A549 (cell line): ENCODE measurements at regions of chr2 and their contacts with region 1.

Region 1: GRCh38 chr2:200811336-200812121 is at the start of gene BZW1:
- DNase-seq: peak; percentile 85 to 97
- ATAC-seq: peak; percentile 82 to 90
- H3K4me3 ChIP-seq: peak within 1 kb of the TSS; percentile 97
- H3K27ac ChIP-seq: peak within 1 kb of the TSS; percentile 96 to 99
- H3K4me1 ChIP-seq: peaks cover 45% of the 10 kb centered on the region
- CTCF ChIP-seq: no peak
- EP300 ChIP-seq: no peak
- POLR2A ChIP-seq: peak; percentile 46
- RAD21 ChIP-seq: 0 out of 5 replicates have a peak, but pooled peaks of 1 of the 2 experiments have one; percentile 2
- polyA plus RNA-seq, gene BZW1: 439 and 494 TPM in 2 replicates

Region 2: DNA sequence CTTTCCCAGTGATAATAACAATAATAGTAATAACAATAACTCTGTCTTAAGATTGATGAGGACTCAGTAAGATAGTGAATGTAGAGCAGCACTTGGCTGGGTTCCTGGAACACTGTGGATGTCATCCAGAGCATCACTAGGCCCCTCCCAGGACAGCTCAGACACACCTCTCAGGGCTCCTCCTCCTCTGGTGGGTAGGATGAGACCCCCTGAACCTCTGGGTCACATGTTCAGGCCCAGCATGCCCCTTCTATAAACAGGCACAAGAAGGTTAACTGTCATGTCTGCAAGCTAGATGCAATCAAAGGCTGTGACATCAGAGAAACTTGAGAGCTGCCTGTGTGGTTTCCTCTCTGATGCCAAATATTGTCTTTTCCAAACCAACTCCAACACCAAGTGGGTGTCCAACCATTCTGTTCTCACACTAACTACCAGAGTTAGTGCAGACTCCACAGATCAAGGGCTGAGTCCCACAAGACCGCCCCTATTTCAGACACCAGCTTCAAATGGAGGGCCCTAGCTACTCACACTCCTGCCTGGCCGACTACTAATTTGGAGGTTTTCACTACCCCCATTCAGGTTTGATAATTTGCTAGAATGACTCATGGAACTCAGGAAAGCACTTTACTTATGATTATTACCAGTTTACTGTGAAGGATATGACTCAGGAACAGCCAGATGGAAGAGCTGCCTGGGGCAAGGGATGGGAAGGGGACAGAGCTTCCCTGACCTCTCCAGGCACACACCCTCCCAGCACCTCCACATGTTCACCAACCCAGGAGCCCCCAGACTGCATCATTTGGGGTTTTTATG is 46.2 kb before region 1 on chr2:
- CTCF ChIA-PET with region 1: interaction called, 5 read pairs
- POLR2A ChIA-PET with region 1: interaction called, 18 read pairs
- DNase-seq: peak; percentile 55 to 90
- ATAC-seq: peak; percentile 86 to 89
- H3K4me3 ChIP-seq: no peak overlapping the region
- H3K27ac ChIP-seq: peak overlapping the region; percentile 85 to 88
- H3K4me1 ChIP-seq: peaks cover 60% of the 10 kb centered on the region
- CTCF ChIP-seq: no peak
- EP300 ChIP-seq: peak; percentile 53 to 77; a peak in 3 of 5 replicates
- POLR2A ChIP-seq: no peak
- RAD21 ChIP-seq: peak; percentile 11 to 50; a peak in 3 of 5 replicates

Region 3: DNA sequence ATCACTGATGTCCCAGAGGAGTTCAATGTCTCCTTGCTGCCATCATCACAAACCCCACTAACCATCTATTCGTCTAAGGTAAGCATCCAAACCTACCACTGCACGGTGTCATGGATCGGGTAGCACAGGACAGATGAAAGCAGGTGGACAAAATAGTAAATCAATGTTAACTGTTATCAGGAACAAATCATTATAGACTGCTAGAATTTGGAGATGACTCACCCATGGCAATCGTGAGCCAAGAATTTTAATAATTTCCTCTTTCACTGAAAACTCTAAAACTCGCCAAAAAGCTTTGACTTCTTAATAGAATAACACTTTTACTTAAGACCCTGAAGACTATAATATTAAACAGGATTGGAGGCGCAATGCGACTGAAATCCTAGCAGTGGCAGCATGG is 33.5 kb before region 1 on chr2:
- CTCF ChIA-PET with region 1: no interaction called
- POLR2A ChIA-PET with region 1: no interaction called
- DNase-seq: no peak
- ATAC-seq: no peak
- H3K4me3 ChIP-seq: no peak overlapping the region
- H3K27ac ChIP-seq: peak overlapping the region; percentile 78 to 79
- H3K4me1 ChIP-seq: peaks cover 56% of the 10 kb centered on the region
- CTCF ChIP-seq: no peak
- EP300 ChIP-seq: no peak
- POLR2A ChIP-seq: no peak
- RAD21 ChIP-seq: no peak